Panc1 (cell line): ENCODE measurements at regions of chr18 and their contacts with region 1.

Region 1: DNA sequence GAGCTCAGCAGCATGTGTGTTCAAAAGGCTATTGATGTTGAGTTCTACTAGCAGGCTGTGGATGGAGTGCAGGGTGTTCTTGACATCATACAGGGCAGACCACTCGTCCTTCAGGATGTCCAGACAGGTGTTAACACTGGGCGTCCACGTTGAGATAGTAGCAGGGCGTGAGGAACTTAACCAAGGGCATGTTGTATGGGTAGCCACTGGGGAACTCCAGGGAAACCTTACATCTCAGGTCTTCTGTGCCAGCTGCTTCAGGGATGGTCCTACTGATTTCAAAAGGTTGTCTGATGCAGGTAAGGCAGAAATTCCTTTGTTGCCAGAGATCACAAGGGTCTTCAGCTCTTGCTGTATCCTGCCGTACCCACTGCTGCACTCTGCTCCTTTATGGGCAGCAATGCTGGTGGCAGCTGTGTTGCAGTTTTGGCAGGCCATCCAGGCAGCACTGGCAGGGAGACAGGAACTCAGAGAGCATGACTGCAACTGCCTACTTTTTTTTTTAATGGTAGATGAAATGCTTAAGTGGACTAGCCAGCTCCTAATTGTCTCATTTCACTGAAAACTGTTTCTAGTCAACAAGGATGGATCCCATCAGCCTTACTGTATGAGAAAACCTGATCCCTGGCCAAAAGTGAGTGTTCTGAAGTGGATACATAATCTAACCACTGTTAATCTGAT is 32.4 kb upstream of the RBBP8 start:
- DNase-seq: no peak
- ATAC-seq: no peak
- H3K4me3 ChIP-seq: no peak overlapping the region
- H3K27ac ChIP-seq: no peak overlapping the region
- H3K4me1 ChIP-seq: no peaks in the 10 kb centered on the region
- H3K27me3 ChIP-seq: no peaks in the 10 kb centered on the region
- CTCF ChIP-seq: no peak

Region 2: DNA sequence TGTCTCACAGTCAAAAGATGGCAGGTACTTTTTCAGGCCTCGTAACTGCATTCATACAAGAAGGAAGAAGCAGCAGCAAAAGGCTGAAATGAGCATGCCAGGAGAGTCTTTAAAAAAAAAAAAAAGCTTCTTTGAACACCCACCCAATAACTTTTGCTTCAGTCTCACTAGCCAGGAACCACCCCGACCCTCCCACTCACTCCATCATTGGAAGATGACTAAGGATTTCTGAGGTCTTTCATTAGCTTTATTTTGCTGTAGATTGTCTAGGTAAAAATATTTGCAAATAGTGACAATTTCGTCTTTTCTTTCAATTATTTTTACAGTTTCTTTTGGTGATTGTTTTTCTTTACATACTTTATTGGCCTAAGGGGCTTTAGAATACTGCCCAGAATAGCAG is 70.3 kb after region 1 on chr18:
- CTCF ChIA-PET with region 1: no interaction called
- POLR2A ChIA-PET with region 1: interaction called, 11 read pairs
- in situ Hi-C with region 1: no loop called
- intact Hi-C with region 1: no loop called
- DNase-seq: no peak
- ATAC-seq: no peak
- H3K4me3 ChIP-seq: no peak overlapping the region
- H3K27ac ChIP-seq: no peak overlapping the region
- H3K4me1 ChIP-seq: no peaks in the 10 kb centered on the region
- H3K27me3 ChIP-seq: no peaks in the 10 kb centered on the region
- CTCF ChIP-seq: no peak